T-cell (primary cell): ENCODE measurements at regions of chr1 and their contacts with region 1.

Region 1: GRCh38 chr1:206912445-206913095 is 9.2 kb downstream of the FCMR start:
- DNase-seq: peak in 33 of 35 experiments; percentile 21 to 86 (median 50)
- ATAC-seq: peak; percentile 31 to 35 (median 34)
- H3K4me3 ChIP-seq: no peak overlapping the region
- H3K4me3 Mint-ChIP-seq: peak overlapping the region in 1 of 3 donors; percentile 48
- H3K27ac ChIP-seq: peak overlapping the region; percentile 29
- H3K27ac Mint-ChIP-seq: peak overlapping the region in 1 of 2 donors; percentile 95
- H3K4me1 ChIP-seq: peaks cover 71 to 93% of the 10 kb centered on the region in 2 experiments
- H3K4me1 Mint-ChIP-seq: peaks cover 93 to 94% (median 93%) of the 10 kb centered on the region in 3 donors
- H3K27me3 ChIP-seq: no peaks in the 10 kb centered on the region
- H3K27me3 Mint-ChIP-seq: no peaks in the 10 kb centered on the region

Region 2: GRCh38 chr1:206725109-206725963 is 187.2 kb before region 1 on chr1:
- CTCF ChIA-PET with region 1: interaction called, 19 to 30 read pairs
- POLR2A ChIA-PET with region 1: no interaction called
- DNase-seq: peak in 32 of 35 experiments; percentile 11 to 81 (median 60)
- ATAC-seq: peak; percentile 44 to 62 (median 52)
- H3K4me3 ChIP-seq: no peak overlapping the region
- H3K4me3 Mint-ChIP-seq: no peak overlapping the region
- H3K27ac ChIP-seq: no peak overlapping the region
- H3K27ac Mint-ChIP-seq: peak overlapping the region; percentile 17 to 39
- H3K4me1 ChIP-seq: peaks cover 8 to 54% of the 10 kb centered on the region in 2 experiments
- H3K4me1 Mint-ChIP-seq: peaks cover 43 to 60% (median 55%) of the 10 kb centered on the region in 3 donors
- H3K27me3 ChIP-seq: no peaks in the 10 kb centered on the region
- H3K27me3 Mint-ChIP-seq: no peaks in the 10 kb centered on the region

Region 3: GRCh38 chr1:206803221-206803730 is 109.3 kb before region 1 on chr1:
- CTCF ChIA-PET with region 1: interaction called, 3 to 16 read pairs
- POLR2A ChIA-PET with region 1: no interaction called
- DNase-seq: peak; percentile 51 to 95 (median 84)
- ATAC-seq: peak; percentile 90 to 96 (median 94)
- H3K4me3 ChIP-seq: no peak overlapping the region
- H3K4me3 Mint-ChIP-seq: peak overlapping the region; percentile 3 to 38 (median 21)
- H3K27ac ChIP-seq: peak overlapping the region; percentile 89
- H3K27ac Mint-ChIP-seq: peak overlapping the region; percentile 91 to 92
- H3K4me1 ChIP-seq: peaks cover 18 to 38% of the 10 kb centered on the region in 2 experiments
- H3K4me1 Mint-ChIP-seq: peaks cover 68 to 85% (median 79%) of the 10 kb centered on the region in 3 donors
- H3K27me3 ChIP-seq: no peaks in the 10 kb centered on the region
- H3K27me3 Mint-ChIP-seq: no peaks in the 10 kb centered on the region

Region 4: GRCh38 chr1:206816390-206817287 is 95.9 kb before region 1 on chr1:
- CTCF ChIA-PET with region 1: interaction called, 9 to 13 read pairs
- POLR2A ChIA-PET with region 1: interaction called in 1 of 2 experiments, 3 read pairs
- DNase-seq: peak in 4 of 35 experiments; percentile 10 to 74 (median 22)
- ATAC-seq: peak; percentile 85 to 95 (median 86)
- H3K4me3 ChIP-seq: no peak overlapping the region
- H3K4me3 Mint-ChIP-seq: peak overlapping the region; percentile 14 to 51 (median 35)
- H3K27ac ChIP-seq: peak overlapping the region; percentile 54
- H3K27ac Mint-ChIP-seq: peak overlapping the region; percentile 88 to 91
- H3K4me1 ChIP-seq: peaks cover 4 to 9% of the 10 kb centered on the region in 2 experiments
- H3K4me1 Mint-ChIP-seq: peaks cover 29 to 43% (median 30%) of the 10 kb centered on the region in 3 donors
- H3K27me3 ChIP-seq: no peaks in the 10 kb centered on the region
- H3K27me3 Mint-ChIP-seq: no peaks in the 10 kb centered on the region

Region 5: DNA sequence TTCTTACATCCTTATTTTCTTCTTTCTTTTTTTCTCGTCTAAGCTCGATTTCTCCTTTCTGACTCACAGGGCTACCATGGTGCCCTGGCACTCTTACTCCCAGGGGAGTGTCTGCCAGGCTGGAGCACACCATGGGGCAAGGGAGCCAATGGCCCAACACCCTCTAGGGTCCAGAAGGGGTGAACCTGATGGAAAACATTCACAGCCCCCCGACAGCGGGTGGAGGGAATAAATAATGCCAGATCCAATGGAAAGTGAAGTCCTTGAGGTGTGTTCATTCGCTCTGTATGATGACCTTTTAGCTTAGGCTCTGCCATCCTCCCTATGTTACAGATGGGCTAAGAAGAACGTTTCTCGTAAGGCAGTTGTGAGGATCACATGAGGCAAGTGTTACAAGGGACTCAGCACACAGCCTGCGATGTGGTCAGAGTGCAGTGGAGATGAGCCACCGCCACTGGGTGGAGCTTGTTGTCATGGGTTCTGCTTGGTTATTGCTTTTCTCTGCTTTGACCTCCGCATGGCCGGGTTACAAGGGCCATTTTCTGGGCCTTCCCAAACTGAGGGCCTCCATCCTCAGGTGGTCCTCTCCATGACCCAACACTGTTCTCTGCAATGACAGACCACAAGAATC is 12.7 kb after region 1 on chr1:
- CTCF ChIA-PET with region 1: interaction called, 27 to 52 read pairs
- POLR2A ChIA-PET with region 1: interaction called, 3 to 6 read pairs
- DNase-seq: peak in 33 of 35 experiments; percentile 40 to 81 (median 57)
- ATAC-seq: peak; percentile 16 to 36 (median 22)
- H3K4me3 ChIP-seq: no peak overlapping the region
- H3K4me3 Mint-ChIP-seq: no peak overlapping the region
- H3K27ac ChIP-seq: peak overlapping the region; percentile 89
- H3K27ac Mint-ChIP-seq: no peak overlapping the region
- H3K4me1 ChIP-seq: peaks cover 30 to 59% of the 10 kb centered on the region in 2 experiments
- H3K4me1 Mint-ChIP-seq: peaks cover 30 to 35% (median 32%) of the 10 kb centered on the region in 3 donors
- H3K27me3 ChIP-seq: no peaks in the 10 kb centered on the region
- H3K27me3 Mint-ChIP-seq: no peaks in the 10 kb centered on the region

Region 6: DNA sequence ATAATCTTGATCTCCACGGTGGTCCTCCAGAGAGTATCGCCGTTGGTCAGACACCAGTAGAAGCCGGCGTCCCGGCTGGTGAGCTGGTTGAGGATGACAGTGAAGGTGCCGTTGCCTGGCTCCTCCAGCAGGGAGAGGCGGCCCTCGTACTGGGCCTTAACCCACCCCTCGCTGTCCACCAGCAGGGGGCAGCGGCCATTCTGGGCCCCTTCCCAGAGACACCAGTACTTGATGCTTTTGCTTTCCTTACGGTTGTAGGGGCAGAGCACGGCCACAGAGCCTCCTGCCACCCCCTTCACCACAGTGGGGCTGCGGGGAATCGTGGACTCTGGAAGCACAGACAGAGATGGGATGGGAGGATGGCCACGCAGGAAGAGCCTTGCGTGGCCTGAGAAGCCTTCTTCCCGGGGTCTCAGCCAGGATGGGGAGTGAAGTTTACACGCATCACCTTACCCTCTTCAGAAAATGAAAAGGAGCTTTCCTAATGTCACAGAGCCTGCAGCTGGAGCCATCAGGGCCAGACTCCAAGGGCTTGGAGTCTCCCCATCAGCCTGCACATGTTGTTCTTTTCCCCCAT is 23.0 kb after region 1 on chr1:
- CTCF ChIA-PET with region 1: interaction called, 20 to 27 read pairs
- POLR2A ChIA-PET with region 1: no interaction called
- DNase-seq: peak in 17 of 35 experiments; percentile 20 to 59 (median 38)
- ATAC-seq: peak in 2 of 4 experiments; percentile 50 to 72
- H3K4me3 ChIP-seq: no peak overlapping the region
- H3K4me3 Mint-ChIP-seq: no peak overlapping the region
- H3K27ac ChIP-seq: no peak overlapping the region
- H3K27ac Mint-ChIP-seq: no peak overlapping the region
- H3K4me1 ChIP-seq: peaks cover 2 to 27% of the 10 kb centered on the region in 2 experiments
- H3K4me1 Mint-ChIP-seq: peaks cover 26 to 31% (median 29%) of the 10 kb centered on the region in 3 donors
- H3K27me3 ChIP-seq: no peaks in the 10 kb centered on the region
- H3K27me3 Mint-ChIP-seq: no peaks in the 10 kb centered on the region